Mammary epithelial cell (primary cell): ENCODE measurements at regions of chr19 and their contacts with region 1.

Region 1: DNA sequence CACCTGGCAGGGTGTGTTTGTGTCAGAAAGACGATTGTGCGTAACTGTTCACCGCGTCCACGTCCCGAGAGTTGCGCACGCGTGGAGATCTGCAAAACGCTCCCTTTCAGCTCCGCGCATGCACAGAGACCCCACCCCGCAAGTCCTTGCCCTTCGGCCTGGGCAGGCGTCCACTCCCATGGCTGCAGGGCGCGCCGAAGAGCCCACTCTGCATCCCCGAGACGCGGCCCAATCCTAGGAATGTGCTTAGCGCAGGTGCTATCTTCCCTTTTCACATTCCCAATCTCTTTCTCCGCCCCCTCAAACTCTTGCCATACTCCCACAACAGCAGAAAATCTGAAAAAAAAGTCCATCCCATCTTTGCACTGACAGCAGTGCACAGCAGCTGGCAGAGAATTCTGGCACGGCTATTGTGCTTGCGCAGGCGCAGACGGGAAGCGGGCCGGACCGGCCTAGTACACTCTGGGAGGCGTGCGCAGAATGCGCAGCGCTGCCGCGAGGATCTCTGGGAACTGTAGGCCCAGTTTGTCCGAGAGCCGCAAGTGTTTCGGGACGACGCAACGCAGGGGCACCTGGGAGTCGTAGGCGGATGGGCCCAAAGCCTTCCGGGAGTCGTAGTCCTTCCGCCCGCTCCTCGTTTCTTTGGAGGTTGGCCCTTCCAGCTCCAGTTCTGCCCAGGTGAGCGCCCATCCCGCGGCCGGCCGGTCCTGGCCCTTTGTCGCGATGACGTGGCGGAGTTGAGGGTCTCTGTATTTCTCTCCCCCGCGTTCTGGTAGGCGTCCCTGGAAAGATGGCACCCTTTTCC is 23.1 kb downstream of the ZNF175 start:
- DNase-seq: peak; percentile 95
- H3K4me3 ChIP-seq: peak overlapping the region; percentile 40 to 70 (median 68)
- H3K27ac ChIP-seq: no peak overlapping the region
- H3K4me1 ChIP-seq: peaks cover 3% of the 10 kb centered on the region
- H3K27me3 ChIP-seq: no peaks in the 10 kb centered on the region
- CTCF ChIP-seq: no peak

Region 2: GRCh38 chr19:51570962-51571575 is 23.1 kb before region 1 on chr19 and contains the start of gene ZNF175:
- CTCF ChIA-PET with region 1: no interaction called
- dilution Hi-C with region 1: no loop called
- in situ Hi-C with region 1: no loop called
- intact Hi-C with region 1: loop called (anchors 1 kb)
- DNase-seq: peak; percentile 94
- H3K4me3 ChIP-seq: peak within 1 kb of the TSS; percentile 57 to 66 (median 60)
- H3K27ac ChIP-seq: no peak within 1 kb of the TSS
- H3K4me1 ChIP-seq: peaks cover 17% of the 10 kb centered on the region
- H3K27me3 ChIP-seq: no peaks in the 10 kb centered on the region
- CTCF ChIP-seq: no peak
- total RNA-seq, gene ZNF175: 4.8 to 6.9 TPM

Region 3: DNA sequence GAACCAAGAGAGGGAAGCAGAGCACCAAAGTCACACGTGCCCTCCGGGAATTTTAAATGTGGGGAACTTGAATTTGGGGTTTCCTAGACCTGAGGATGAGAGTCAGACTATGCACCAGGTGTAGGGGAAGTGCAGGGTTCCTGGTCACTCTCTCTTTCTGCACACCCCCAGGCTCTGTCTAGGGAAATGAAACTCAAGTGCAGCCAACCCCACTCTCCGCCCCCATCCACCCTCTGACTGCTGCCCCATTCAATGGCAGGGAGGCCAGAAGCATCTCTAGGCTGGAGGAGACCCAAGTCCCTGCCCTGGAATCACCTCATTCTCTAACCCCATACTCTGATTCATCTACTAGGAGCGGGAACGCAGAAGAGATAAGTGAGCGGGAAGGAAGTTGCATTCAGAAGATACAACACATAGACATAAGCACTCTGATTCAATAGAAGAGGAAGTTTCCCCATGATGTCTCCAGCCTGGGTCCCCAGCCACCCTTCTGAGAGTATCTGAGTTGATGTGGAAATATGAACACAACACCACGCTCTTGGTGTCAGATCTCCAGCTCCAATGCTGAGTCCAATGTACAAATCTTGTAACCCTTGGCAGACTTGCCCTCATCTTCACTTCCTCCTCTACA is 57.2 kb after region 1 on chr19:
- CTCF ChIA-PET with region 1: no interaction called
- dilution Hi-C with region 1: no loop called
- in situ Hi-C with region 1: no loop called
- intact Hi-C with region 1: loop called (anchors 5 kb)
- DNase-seq: no peak
- H3K4me3 ChIP-seq: no peak overlapping the region
- H3K27ac ChIP-seq: no peak overlapping the region
- H3K4me1 ChIP-seq: no peaks in the 10 kb centered on the region
- H3K27me3 ChIP-seq: no peaks in the 10 kb centered on the region
- CTCF ChIP-seq: no peak

Region 4: DNA sequence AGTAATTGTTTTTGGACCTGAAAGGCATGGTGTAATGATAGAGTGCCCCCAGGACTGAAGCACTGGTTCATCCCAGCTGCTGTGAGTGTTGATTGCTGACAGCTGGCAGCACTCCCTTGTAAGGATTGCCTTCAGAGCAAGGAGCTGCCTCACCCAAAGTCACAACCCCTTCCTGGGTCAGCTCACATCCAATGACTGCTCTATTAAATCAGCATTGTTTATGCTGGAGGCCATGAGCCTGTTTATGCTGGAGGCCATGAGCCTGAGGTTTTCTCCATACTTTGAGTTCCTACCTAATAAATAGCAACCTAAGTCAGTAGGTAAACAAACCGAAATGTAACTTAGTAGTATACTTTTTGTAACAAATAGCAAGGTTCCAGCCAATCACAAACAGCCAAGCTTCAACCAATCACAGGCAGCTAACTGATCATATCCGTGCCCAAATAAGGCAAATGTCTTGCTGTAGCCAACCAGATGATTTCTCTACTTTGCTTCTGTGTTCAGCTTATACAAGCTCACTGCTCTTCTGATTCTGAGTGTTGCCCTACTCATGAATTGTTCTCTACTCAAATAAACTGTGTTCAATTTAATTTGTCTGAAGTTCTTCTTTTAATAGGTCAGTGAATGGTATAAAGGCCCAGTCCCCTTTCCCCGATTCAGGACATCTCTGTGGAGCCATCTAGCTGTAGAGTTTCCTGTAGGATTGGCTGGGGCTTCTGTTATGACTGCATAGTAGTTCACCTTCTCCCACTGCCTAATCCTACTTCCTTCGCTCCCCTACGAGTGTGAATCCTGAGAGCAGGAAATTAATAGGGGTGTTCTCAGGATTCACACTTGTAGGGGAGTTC is 87.4 kb after region 1 on chr19:
- CTCF ChIA-PET with region 1: no interaction called
- dilution Hi-C with region 1: loop called (anchors 5 kb)
- in situ Hi-C with region 1: no loop called
- intact Hi-C with region 1: no loop called
- DNase-seq: no peak
- H3K4me3 ChIP-seq: no peak overlapping the region
- H3K27ac ChIP-seq: no peak overlapping the region
- H3K4me1 ChIP-seq: peaks cover 6% of the 10 kb centered on the region
- H3K27me3 ChIP-seq: no peaks in the 10 kb centered on the region
- CTCF ChIP-seq: no peak